Transverse colon (tissue), 4 donors: ENCODE measurements at regions of chr7 and their contacts with region 1.

Region 1: DNA sequence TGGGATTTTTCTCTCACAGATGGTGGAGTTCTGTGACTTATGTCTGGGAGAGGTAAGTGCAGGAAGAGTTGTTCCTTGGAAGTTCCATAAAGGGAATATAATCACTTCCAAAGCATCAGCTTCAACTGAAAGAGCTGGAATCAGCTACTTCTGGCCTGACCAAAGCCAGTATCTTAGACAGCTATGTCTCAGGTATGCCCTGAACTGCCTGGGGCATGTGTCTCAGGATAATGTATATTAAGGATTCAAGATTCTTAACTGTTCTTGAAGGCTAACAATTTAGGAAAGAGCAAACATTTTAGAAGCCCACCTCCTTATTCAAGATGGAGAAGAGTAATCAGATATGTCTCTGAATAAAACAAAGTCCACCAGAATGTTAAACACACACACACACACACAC is 12.4 kb upstream of the NOBOX start:
- DNase-seq: no peak
- H3K4me3 ChIP-seq: no peak overlapping the region
- H3K27ac ChIP-seq: no peak overlapping the region
- H3K4me1 ChIP-seq: peaks cover 0 to 5% (median 0%) of the 10 kb centered on the region in 4 donors
- H3K27me3 ChIP-seq: no peaks in the 10 kb centered on the region
- CTCF ChIP-seq: no peak
- EP300 ChIP-seq: no peak
- POLR2A ChIP-seq: no peak

Region 2: GRCh38 chr7:144404946-144405345 is 10.9 kb before region 1 on chr7:
- in situ Hi-C with region 1: no loop called
- intact Hi-C with region 1: loop called (anchors 1 kb)
- DNase-seq: no peak
- H3K4me3 ChIP-seq: no peak overlapping the region
- H3K27ac ChIP-seq: no peak overlapping the region
- H3K4me1 ChIP-seq: peaks cover 0 to 9% (median 0%) of the 10 kb centered on the region in 4 donors
- H3K27me3 ChIP-seq: no peaks in the 10 kb centered on the region
- CTCF ChIP-seq: no peak
- EP300 ChIP-seq: no peak
- POLR2A ChIP-seq: no peak

Region 3: DNA sequence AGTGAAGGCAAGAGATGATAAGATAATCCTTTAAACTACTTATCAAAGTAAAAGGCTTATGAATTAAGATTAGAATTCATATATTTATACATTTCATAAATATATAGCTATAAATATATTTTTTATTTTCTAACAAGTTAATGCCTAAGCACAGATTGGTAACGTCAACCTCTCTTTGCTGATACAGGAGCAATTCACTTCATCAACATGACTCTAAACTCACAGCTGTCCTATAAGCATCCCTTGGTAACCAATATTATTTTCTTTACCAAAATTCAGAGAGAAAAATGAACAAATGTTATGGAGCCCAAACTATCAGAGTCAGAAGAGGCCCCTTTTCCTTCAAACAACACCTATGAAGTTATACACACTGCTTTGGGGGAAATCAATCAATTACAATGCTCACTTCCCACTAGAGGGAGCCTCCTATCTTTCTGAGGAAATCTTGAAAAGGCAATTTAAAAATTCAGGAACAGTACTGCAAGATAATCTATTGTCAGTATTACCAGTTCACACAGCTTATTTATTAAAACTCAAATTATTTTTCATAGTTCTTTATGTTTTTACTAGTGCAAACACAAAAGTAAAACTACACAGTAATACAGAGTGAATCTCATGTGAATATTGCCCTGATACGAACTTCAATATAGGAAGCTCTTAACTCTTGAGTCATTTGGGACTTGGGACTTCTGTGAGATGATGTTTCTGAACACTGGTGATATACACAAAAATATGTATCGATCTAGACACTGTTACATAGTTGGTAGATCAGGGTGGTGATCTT is 38.6 kb after region 1 on chr7:
- in situ Hi-C with region 1: no loop called
- intact Hi-C with region 1: loop called (anchors 2 kb)
- DNase-seq: no peak
- H3K4me3 ChIP-seq: no peak overlapping the region
- H3K27ac ChIP-seq: no peak overlapping the region
- H3K4me1 ChIP-seq: no peaks in the 10 kb centered on the region
- H3K27me3 ChIP-seq: no peaks in the 10 kb centered on the region
- CTCF ChIP-seq: peak in 3 of 5 experiments; percentile 13 to 22 (median 17)
- EP300 ChIP-seq: no peak
- POLR2A ChIP-seq: no peak